ENCODE measurements at regions of chr6 and their contacts with region 1.

Region 1: DNA sequence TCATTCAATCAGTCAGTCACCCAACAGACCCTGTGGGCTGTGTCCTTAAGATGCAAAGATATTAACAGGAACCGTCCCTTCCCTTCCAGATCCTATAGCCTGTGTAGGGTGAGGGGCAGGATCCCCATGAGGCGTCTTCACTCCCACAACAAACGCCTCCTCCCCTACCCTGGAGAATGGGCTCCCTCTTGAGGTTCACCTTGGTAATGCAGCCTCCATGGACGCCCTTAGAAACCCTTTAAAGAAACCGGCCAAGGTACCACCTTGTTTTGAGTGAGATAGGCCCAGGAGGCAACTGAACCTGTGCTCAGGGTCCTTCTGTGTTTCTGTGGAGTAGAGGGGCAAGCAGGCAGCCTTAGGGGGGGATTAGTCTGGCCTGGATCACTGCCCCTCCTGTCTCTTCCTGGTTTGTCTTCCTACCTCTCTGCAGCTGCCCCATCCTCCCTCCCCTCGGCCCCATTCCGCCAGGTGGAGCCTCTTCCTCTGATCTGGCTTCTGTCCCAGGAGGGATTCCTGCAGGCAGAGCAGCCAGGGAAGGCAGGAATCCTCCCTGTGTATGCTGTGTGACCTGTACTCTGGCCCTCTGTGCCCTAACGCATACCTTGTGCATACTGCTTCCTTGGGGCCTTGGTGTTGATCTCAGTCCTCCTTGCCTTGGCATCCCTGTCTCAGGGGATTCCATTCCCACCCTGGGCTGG is 6.6 kb upstream of the GUCA1A start:
- DNase-seq: peak; percentile 77 to 97
- H3K4me3 ChIP-seq: no peak overlapping the region
- H3K27ac ChIP-seq: peak overlapping the region; percentile 48
- H3K4me1 ChIP-seq: peaks cover 7 to 22% (median 11%) of the 10 kb centered on the region in 4 experiments
- H3K27me3 ChIP-seq: no peaks in the 10 kb centered on the region; a peak in 1 of 7 replicates
- CTCF ChIP-seq: peak; percentile 80 to 93 (median 89)
- EP300 ChIP-seq: no peak
- POLR2A ChIP-seq: no peak
- RAD21 ChIP-seq: peak; percentile 91 to 93

Region 2: GRCh38 chr6:42075159-42075838 is 91.3 kb before region 1 on chr6:
- CTCF ChIA-PET with region 1: interaction called, 55 read pairs
- POLR2A ChIA-PET with region 1: interaction called, 3 read pairs
- DNase-seq: peak in 1 of 2 experiments; percentile 90
- H3K4me3 ChIP-seq: no peak overlapping the region
- H3K27ac ChIP-seq: no peak overlapping the region
- H3K4me1 ChIP-seq: no peaks in the 10 kb centered on the region
- H3K27me3 ChIP-seq: no peaks in the 10 kb centered on the region
- CTCF ChIP-seq: peak; percentile 81 to 90 (median 83)
- EP300 ChIP-seq: no peak
- POLR2A ChIP-seq: no peak
- RAD21 ChIP-seq: peak; percentile 88 to 91

Region 3: GRCh38 chr6:42148058-42148457 is 18.5 kb before region 1 on chr6:
- CTCF ChIA-PET with region 1: interaction called, 123 read pairs
- POLR2A ChIA-PET with region 1: interaction called, 109 read pairs
- DNase-seq: no peak
- H3K4me3 ChIP-seq: no peak overlapping the region
- H3K27ac ChIP-seq: no peak overlapping the region
- H3K4me1 ChIP-seq: peaks cover 0 to 7% (median 3%) of the 10 kb centered on the region in 4 experiments; a peak in 4 of 7 replicates
- H3K27me3 ChIP-seq: no peaks in the 10 kb centered on the region
- CTCF ChIP-seq: no peak
- EP300 ChIP-seq: no peak
- POLR2A ChIP-seq: no peak
- RAD21 ChIP-seq: no peak

Region 4: GRCh38 chr6:42200035-42200434 is 33.4 kb after region 1 on chr6:
- CTCF ChIA-PET with region 1: interaction called, 10 read pairs
- POLR2A ChIA-PET with region 1: no interaction called
- DNase-seq: no peak
- H3K4me3 ChIP-seq: no peak overlapping the region
- H3K27ac ChIP-seq: no peak overlapping the region
- H3K4me1 ChIP-seq: no peaks in the 10 kb centered on the region
- H3K27me3 ChIP-seq: no peaks in the 10 kb centered on the region
- CTCF ChIP-seq: no peak
- EP300 ChIP-seq: no peak
- POLR2A ChIP-seq: no peak
- RAD21 ChIP-seq: no peak

Region 5: DNA sequence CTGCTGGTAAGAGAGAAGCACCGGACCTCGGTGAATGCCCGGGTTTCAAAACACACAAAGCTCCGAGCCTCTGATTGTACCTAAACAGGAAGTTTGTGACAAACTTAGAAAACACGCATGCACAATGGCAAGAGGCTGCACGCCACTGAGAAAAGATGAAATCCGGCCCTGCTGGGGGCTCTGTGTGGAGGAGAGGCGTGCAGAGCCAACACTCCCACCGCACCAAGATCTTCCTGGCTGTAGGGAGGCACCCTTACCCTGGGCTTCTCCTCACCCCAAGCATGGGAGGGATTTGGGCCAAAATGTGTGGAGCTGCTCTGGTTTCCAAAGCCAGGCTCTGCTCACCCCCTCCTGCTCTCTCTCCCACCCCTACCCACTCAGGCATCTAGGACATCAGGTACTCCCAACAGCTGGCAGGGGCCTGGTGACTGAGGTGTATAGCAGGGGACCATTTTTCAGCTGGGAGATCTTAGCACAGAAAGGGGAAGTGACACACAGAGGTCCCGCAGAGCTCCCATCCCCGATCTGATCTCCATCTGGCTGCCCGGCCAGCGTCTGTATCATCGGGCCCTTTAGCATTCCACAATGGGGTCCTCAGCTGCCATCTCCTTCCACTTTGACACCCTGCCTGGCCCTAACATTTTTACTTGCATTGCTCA is 200.9 kb after region 1 on chr6:
- CTCF ChIA-PET with region 1: no interaction called
- POLR2A ChIA-PET with region 1: no interaction called
- DNase-seq: no peak
- H3K4me3 ChIP-seq: no peak overlapping the region
- H3K27ac ChIP-seq: no peak overlapping the region
- H3K4me1 ChIP-seq: peaks cover 0 to 3% (median 0%) of the 10 kb centered on the region in 4 experiments; a peak in 3 of 7 replicates
- H3K27me3 ChIP-seq: no peaks in the 10 kb centered on the region
- CTCF ChIP-seq: no peak
- EP300 ChIP-seq: no peak
- POLR2A ChIP-seq: no peak
- RAD21 ChIP-seq: no peak